Kidney (tissue), 22 donors: ENCODE measurements at regions of chr16 and their contacts with region 1.

Region 1: DNA sequence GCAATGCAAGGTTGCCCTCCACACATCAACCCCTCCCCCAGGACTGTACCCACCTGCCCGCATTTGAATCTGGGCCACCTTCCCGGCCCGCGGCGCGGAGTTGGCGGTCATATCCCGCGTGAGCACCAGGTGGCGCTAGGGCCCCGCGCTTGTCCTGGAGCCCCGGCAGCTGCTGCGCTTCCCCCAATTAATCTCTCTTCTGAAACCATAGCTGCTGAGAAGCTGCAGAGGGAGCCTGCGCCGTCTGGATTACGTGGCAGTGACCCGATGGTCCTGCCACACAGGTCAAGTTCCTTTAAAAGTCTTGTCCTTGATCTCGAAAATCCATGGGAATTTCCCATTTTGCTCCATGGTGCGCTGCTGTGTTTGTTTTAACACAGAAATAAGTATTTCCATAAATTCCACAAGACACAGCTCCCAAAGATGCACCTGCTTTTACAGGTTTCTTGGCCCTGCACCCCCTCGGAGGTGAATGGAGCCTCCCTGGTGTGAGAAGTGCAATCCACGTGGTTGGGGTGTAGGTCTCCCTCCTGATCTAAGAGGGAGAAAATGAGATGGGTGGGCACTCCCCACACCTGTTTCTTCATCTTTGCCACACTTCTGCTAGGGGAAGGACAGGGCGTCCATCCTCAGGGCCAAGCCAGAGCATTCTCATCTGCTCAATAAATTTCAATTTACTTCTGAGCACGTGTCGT is 22.1 kb downstream of the COX4I1 start:
- DNase-seq: peak; percentile 83 to 91 (median 88)
- H3K4me3 ChIP-seq: no peak overlapping the region
- H3K27ac ChIP-seq: no peak overlapping the region
- H3K4me1 ChIP-seq: no peaks in the 10 kb centered on the region
- H3K27me3 ChIP-seq: peaks cover 3% of the 10 kb centered on the region
- CTCF ChIP-seq: peak; percentile 92

Region 2: GRCh38 chr16:85626191-85626981 is 195.2 kb before region 1 on chr16:
- intact Hi-C with region 1: no loop called
- DNase-seq: peak in 3 of 5 donors; percentile 70 to 82 (median 72)
- H3K4me3 ChIP-seq: no peak overlapping the region
- H3K27ac ChIP-seq: no peak overlapping the region
- H3K4me1 ChIP-seq: peaks cover 0 to 34% (median 27%) of the 10 kb centered on the region in 3 donors
- H3K27me3 ChIP-seq: no peaks in the 10 kb centered on the region
- CTCF ChIP-seq: no peak

Region 3: GRCh38 chr16:85869785-85870558 is 48.4 kb after region 1 on chr16:
- intact Hi-C with region 1: no loop called
- DNase-seq: peak in 3 of 5 donors; percentile 42 to 57 (median 48)
- H3K4me3 ChIP-seq: no peak overlapping the region
- H3K27ac ChIP-seq: no peak overlapping the region
- H3K4me1 ChIP-seq: peaks cover 0 to 3% (median 2%) of the 10 kb centered on the region in 3 donors
- H3K27me3 ChIP-seq: no peaks in the 10 kb centered on the region
- CTCF ChIP-seq: no peak

Region 4: DNA sequence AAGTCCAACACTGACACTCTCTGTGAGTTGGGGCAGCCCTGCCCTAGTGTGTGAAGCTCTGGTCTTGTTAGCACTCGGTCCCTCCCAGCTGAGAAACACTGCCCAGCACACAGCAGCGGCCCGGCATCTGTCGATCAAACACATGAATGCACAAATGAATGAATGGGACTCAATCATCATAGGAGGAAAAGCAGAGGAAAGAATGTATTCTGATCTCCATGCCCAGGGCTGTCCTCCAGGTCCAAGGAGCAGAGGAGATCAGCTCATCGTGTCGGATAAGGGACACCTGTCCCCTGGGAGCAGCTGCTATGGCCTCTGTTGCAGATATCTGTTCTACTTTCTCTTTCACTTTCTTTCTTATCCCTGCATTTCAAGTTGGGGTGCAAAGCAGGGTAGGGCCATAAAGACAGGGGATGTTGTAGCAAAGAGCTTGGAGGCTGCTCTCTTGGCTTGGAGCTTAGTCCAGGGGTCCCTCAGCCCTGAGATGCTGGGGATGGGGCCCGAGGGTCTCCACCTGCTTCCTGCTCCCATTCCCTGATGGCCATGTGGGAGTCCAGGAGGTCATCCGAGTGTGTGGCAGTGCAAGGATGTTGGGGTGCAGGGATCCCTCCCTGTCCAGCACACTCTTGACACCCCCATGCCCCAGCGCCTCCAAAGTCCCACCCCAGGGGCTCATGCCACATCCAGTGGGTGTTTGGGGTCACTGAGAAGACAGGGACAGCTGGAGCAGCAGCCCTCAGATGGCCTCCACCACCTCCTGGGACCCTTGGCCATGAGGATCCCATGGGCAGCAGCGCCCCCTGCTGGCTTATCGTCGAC is 165.6 kb after region 1 on chr16:
- intact Hi-C with region 1: loop called (anchors 5 kb)
- DNase-seq: peak in 1 of 5 donors; percentile 75
- H3K4me3 ChIP-seq: peak overlapping the region in 1 of 3 donors; percentile 6
- H3K27ac ChIP-seq: no peak overlapping the region
- H3K4me1 ChIP-seq: peaks cover 0 to 5% (median 0%) of the 10 kb centered on the region in 3 donors
- H3K27me3 ChIP-seq: no peaks in the 10 kb centered on the region
- CTCF ChIP-seq: peak; percentile 12

Region 5: DNA sequence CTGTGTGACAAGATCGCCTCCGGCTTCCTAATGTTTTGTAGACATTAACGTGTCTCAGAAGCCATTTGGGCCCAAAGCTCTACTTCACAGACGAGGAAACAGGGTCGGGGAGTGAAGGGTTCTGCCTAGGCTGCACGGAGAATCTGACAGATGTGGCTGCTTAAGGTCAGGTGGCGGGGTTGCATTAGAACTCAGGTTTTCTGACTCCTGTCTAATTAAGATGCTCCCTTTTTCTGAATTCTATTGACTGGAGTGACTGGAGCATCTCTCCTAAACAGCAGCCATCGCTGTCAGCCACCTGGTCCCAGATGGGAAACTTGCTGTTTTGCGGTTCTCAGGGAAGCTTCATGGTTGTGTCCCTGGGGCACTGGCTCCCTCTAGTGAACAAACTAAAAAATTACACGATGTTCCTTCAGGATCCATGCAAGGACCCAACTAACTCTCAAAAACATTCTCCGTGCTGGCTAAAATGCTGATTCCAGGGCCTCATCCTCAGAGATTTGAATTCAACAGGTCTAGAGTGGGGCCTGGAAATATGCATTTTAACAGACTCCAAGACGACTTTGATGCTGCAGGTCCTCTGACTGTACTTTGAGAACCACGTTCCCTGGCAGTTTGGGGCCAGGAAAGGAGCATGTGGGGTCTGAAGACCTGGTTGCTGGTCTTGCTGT is 194.7 kb after region 1 on chr16:
- intact Hi-C with region 1: loop called (anchors 10 kb)
- DNase-seq: peak; percentile 41 to 85 (median 72)
- H3K4me3 ChIP-seq: no peak overlapping the region
- H3K27ac ChIP-seq: no peak overlapping the region
- H3K4me1 ChIP-seq: no peaks in the 10 kb centered on the region
- H3K27me3 ChIP-seq: no peaks in the 10 kb centered on the region
- CTCF ChIP-seq: peak; percentile 71

Region 6: GRCh38 chr16:86519649-86520316 is 698.2 kb after region 1 on chr16:
- intact Hi-C with region 1: loop called (anchors 10 kb)
- DNase-seq: peak; percentile 63 to 81 (median 74)
- H3K4me3 ChIP-seq: no peak overlapping the region
- H3K27ac ChIP-seq: no peak overlapping the region
- H3K4me1 ChIP-seq: peaks cover 0 to 3% (median 0%) of the 10 kb centered on the region in 3 donors
- H3K27me3 ChIP-seq: peaks cover 34% of the 10 kb centered on the region
- CTCF ChIP-seq: peak; percentile 84